ENCODE measurements at regions of chr15 and their contacts with region 1.

Region 1: GRCh38 chr15:36501063-36501678 is 78.3 kb upstream of the CDIN1 start:
- DNase-seq: peak; percentile 87
- ATAC-seq: peak; percentile 95
- H3K4me3 ChIP-seq: no peak overlapping the region
- H3K27ac ChIP-seq: no peak overlapping the region
- H3K4me1 ChIP-seq: peaks cover 39% of the 10 kb centered on the region
- H3K27me3 ChIP-seq: no peaks in the 10 kb centered on the region
- CTCF ChIP-seq: peak; percentile 95

Region 2: DNA sequence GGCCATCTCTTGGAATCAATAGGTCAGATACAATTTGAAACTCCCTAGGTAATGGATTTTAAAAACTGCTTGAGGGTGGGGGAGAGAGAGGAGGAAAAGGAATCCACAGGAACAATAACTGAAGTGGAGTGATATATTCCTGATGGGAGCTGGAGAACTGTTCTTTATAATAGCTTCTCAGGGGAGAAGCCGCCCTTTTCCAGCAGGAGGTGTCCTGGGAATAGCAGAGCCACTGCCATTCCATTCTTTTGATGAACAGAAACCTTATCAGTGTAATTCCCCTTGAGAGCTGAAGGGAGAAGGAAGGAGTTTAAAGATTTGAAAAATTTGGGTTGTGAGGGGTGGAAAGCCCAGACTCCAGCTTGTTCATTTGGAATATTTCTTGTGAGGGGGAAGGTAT is 450.3 kb before region 1 on chr15:
- CTCF ChIA-PET with region 1: no interaction called
- POLR2A ChIA-PET with region 1: no interaction called
- intact Hi-C with region 1: loop called (anchors 5 kb)
- DNase-seq: no peak
- ATAC-seq: 0 out of 2 replicates have a peak, but pooled peaks have one; percentile 18
- H3K4me3 ChIP-seq: no peak overlapping the region
- H3K27ac ChIP-seq: no peak overlapping the region
- H3K4me1 ChIP-seq: no peaks in the 10 kb centered on the region
- H3K27me3 ChIP-seq: no peaks in the 10 kb centered on the region
- CTCF ChIP-seq: no peak

Region 3: DNA sequence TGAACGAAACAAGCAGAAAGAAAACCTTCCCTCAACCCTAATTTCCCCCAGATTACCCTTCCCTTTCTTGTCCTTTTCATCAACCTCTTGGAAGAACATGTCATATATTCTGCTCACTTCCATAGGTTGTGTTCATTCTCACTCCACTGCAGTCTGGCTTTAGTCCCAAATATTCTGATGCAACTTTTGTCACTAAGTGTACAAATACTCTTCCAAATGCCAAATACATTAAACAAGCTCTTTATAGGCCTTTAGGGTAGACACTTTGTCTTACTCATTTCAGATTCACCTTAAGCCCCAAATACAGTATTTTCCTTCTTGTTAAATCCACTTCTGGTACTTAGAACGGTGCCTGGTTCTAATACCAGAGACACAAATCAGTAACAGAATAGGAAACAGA is 328.2 kb before region 1 on chr15:
- CTCF ChIA-PET with region 1: no interaction called
- POLR2A ChIA-PET with region 1: no interaction called
- intact Hi-C with region 1: no loop called
- DNase-seq: peak; percentile 83
- ATAC-seq: peak; percentile 87
- H3K4me3 ChIP-seq: no peak overlapping the region
- H3K27ac ChIP-seq: no peak overlapping the region
- H3K4me1 ChIP-seq: peaks cover 18% of the 10 kb centered on the region
- H3K27me3 ChIP-seq: no peaks in the 10 kb centered on the region
- CTCF ChIP-seq: no peak

Region 4: GRCh38 chr15:36334059-36334458 is 167.1 kb before region 1 on chr15:
- CTCF ChIA-PET with region 1: no interaction called
- POLR2A ChIA-PET with region 1: no interaction called
- intact Hi-C with region 1: loop called (anchors 2 kb)
- DNase-seq: peak; percentile 58
- ATAC-seq: no peak; the same call in 1 of the 2 replicates
- H3K4me3 ChIP-seq: no peak overlapping the region
- H3K27ac ChIP-seq: peak overlapping the region; percentile 96
- H3K4me1 ChIP-seq: peaks cover 34% of the 10 kb centered on the region
- H3K27me3 ChIP-seq: no peaks in the 10 kb centered on the region
- CTCF ChIP-seq: no peak

Region 5: DNA sequence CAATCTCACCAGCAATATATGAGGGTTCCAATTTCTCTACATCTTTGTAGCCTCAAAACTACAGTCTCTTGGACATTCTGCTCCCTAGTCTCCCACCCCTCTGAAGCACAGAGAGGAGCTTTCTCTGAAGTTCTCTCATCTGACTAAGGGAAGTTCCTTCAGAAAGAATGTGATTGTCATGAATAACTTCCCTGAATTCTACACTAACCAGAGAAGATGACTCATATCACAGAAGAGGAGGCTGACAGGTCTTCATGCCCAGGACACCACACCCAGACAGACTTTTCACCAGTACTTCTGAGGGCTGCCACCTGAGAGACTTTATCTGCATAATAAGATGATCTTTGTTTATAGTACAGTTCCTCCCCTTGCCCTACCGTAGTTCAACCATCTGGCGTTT is 131.0 kb after region 1 on chr15:
- CTCF ChIA-PET with region 1: no interaction called
- POLR2A ChIA-PET with region 1: no interaction called
- intact Hi-C with region 1: loop called (anchors 5 kb)
- DNase-seq: peak; percentile 81
- ATAC-seq: peak; percentile 100
- H3K4me3 ChIP-seq: no peak overlapping the region
- H3K27ac ChIP-seq: peak overlapping the region; percentile 24; the same call in 1 of the 2 replicates
- H3K4me1 ChIP-seq: peaks cover 11% of the 10 kb centered on the region
- H3K27me3 ChIP-seq: no peaks in the 10 kb centered on the region
- CTCF ChIP-seq: no peak

Region 6: GRCh38 chr15:37100109-37100965 is 599.2 kb after region 1 on chr15 and contains the start of gene MEIS2:
- CTCF ChIA-PET with region 1: no interaction called
- POLR2A ChIA-PET with region 1: no interaction called
- intact Hi-C with region 1: loop called (anchors 10 kb)
- DNase-seq: peak; percentile 85
- ATAC-seq: peak; percentile 41
- H3K4me3 ChIP-seq: peak within 1 kb of the TSS; percentile 93
- H3K27ac ChIP-seq: peak within 1 kb of the TSS; percentile 87
- H3K4me1 ChIP-seq: peaks cover 24% of the 10 kb centered on the region; the same call in 1 of the 2 replicates
- H3K27me3 ChIP-seq: no peaks in the 10 kb centered on the region
- CTCF ChIP-seq: no peak
- total RNA-seq, gene MEIS2: 10.0 and 17.5 TPM in 2 replicates

Measured in PC-3 (cell line).